ENCODE measurements at regions of chr20 and their contacts with region 1.

Region 1: DNA sequence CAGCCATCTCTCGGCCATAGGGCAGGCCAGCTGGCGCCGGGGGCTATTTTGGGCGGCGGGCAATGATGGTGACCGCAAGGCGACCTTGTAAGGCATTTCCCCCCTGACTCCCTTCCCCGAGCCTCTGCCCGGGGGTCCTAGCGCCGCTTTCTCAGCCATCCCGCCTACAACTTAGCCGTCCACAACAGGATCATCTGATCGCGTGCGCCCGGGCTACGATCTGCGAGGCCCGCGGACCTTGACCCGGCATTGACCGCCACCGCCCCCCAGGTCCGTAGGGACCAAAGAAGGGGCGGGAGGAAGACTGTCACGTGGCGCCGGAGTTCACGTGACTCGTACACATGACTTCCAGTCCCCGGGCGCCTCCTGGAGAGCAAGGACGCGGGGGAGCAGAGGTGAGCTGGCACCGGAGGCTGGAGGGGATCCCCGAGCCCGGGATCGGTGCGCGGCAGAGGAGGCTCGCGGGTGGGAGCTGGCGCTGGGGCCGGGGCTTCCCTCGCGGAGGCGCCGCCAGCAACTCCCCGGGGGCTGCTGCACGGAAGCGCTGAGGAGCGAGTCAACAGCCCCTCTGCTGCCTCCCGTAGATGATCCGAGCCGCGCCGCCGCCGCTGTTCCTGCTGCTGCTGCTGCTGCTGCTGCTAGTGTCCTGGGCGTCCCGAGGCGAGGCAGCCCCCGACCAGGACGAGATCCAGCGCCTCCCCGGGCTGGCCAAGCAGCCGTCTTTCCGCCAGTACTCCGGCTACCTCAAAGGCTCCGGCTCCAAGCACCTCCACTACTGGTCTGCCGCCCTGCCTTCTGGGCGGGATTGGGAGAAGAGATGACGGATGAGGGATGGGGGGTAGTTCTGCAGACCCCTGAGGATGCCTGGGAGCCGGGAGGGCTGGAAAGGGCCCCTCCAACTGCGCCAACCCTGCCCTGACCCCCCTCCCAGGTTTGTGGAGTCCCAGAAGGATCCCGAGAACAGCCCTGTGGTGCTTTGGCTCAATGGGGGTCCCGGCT is at the starts of genes CTSA and NEURL2:
- DNase-seq: peak; percentile 79 to 88 (median 83)
- H3K4me3 ChIP-seq: peak within 1 kb of the TSS; percentile 69 to 79
- H3K4me3 Mint-ChIP-seq: peak within 1 kb of the TSS; percentile 91 to 97 (median 93)
- H3K27ac ChIP-seq: peak within 1 kb of the TSS; percentile 74
- H3K27ac Mint-ChIP-seq: peak within 1 kb of the TSS; percentile 76 to 94 (median 90)
- H3K4me1 ChIP-seq: peaks cover 37% of the 10 kb centered on the region
- H3K4me1 Mint-ChIP-seq: peaks cover 19 to 48% (median 33%) of the 10 kb centered on the region in 4 donors
- H3K27me3 ChIP-seq: no peaks in the 10 kb centered on the region
- H3K27me3 Mint-ChIP-seq: no peaks in the 10 kb centered on the region
- total RNA-seq, gene CTSA: 102 to 103 TPM
- total RNA-seq, gene NEURL2: 5.5 to 5.6 TPM

Region 2: DNA sequence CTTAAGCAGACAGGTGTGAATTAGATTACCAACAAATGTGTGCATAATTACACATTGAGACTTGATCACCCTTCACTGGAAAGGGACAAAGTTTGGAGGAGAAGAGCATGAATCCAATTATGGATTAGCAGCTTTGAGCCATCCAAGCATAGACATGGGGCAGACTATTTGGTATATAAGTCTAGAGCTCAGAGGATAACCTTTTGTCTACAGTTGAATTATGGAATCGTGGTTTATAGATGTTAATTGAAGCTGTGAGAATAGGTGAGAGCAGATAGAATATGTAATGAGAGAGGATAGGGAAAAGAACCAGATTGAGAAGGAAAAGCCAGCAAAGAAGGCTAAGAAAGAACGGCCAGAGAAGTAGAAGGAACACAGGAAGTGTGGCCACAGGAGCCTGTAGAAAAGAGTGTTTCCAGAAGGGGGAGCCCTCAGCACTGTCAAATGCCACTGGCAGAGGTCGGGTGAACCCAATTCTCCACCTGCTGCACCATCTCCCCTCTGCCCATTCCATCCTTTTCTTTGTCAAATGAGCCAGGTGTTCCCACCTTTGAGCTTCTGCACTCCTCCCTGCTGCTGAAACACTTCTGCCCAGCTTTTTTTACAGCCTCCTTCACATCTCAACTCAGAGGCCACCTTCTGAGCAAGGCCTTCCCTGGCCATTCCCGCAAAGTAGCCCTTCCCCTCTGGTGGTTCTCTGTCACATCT is 92.2 kb before region 1 on chr20:
- CTCF ChIA-PET with region 1: interaction called, 15 read pairs
- POLR2A ChIA-PET with region 1: no interaction called
- intact Hi-C with region 1: loop called (anchors 1 kb)
- DNase-seq: peak; percentile 56 to 62 (median 60)
- H3K4me3 ChIP-seq: no peak overlapping the region
- H3K4me3 Mint-ChIP-seq: no peak overlapping the region
- H3K27ac ChIP-seq: no peak overlapping the region
- H3K27ac Mint-ChIP-seq: peak overlapping the region in 6 of 7 donors; percentile 3 to 89 (median 46)
- H3K4me1 ChIP-seq: peaks cover 7% of the 10 kb centered on the region
- H3K4me1 Mint-ChIP-seq: peaks cover 4 to 11% (median 8%) of the 10 kb centered on the region in 4 donors
- H3K27me3 ChIP-seq: no peaks in the 10 kb centered on the region
- H3K27me3 Mint-ChIP-seq: no peaks in the 10 kb centered on the region

Region 3: DNA sequence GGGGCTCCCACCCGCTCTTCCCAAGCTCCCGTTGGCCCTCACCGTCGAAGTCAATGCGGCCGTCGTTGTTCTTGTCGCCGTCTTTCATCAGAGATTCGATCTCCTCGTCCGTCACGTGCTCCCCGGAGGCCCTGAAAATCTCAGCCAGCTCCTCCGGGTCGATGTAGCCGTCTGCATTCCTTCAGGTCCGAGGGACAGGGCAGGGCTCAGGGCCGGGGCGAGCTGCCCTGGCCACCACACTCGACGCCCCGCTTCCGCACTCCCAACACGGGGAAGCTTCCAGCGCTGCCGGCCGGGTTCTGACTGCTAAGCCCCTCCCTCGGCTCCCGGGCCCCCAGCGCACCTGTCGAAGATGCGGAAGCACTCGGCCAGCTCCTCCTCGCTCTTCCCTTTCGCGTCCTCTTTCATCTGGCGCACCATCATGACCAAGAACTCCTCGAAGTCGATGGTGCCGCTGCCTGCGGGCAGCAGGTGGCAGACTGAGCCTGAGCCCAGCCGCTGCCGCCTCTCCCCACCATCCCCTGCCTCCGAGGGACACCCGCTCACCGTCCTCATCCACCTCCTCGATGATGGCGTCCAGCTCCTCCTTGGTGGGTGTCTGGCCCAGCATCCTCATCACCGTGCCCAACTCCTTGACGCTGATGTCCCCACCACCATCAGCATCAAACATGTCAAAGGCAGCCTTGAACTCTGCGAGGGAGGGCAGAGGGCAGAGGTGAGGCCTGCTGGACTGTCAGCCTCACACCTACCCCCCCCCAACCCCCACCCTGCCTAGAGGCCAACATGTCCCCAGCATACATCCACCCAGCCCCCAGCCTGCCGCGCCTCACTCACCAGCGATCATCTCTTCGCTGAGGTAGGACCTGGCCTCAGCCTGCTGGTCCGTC is 67.1 kb before region 1 on chr20:
- CTCF ChIA-PET with region 1: interaction called, 4 read pairs
- POLR2A ChIA-PET with region 1: interaction called, 3 read pairs
- intact Hi-C with region 1: loop called (anchors 2 kb)
- DNase-seq: peak; percentile 37 to 58 (median 47)
- H3K4me3 ChIP-seq: peak overlapping the region in 1 of 2 donors; percentile 46
- H3K4me3 Mint-ChIP-seq: peak overlapping the region; percentile 64 to 84 (median 80)
- H3K27ac ChIP-seq: no peak overlapping the region
- H3K27ac Mint-ChIP-seq: peak overlapping the region in 6 of 7 donors; percentile 2 to 86 (median 66)
- H3K4me1 ChIP-seq: peaks cover 7% of the 10 kb centered on the region
- H3K4me1 Mint-ChIP-seq: peaks cover 7 to 22% (median 15%) of the 10 kb centered on the region in 4 donors
- H3K27me3 ChIP-seq: no peaks in the 10 kb centered on the region
- H3K27me3 Mint-ChIP-seq: peaks cover 6 to 19% of the 10 kb centered on the region in 2 donors

Region 4: DNA sequence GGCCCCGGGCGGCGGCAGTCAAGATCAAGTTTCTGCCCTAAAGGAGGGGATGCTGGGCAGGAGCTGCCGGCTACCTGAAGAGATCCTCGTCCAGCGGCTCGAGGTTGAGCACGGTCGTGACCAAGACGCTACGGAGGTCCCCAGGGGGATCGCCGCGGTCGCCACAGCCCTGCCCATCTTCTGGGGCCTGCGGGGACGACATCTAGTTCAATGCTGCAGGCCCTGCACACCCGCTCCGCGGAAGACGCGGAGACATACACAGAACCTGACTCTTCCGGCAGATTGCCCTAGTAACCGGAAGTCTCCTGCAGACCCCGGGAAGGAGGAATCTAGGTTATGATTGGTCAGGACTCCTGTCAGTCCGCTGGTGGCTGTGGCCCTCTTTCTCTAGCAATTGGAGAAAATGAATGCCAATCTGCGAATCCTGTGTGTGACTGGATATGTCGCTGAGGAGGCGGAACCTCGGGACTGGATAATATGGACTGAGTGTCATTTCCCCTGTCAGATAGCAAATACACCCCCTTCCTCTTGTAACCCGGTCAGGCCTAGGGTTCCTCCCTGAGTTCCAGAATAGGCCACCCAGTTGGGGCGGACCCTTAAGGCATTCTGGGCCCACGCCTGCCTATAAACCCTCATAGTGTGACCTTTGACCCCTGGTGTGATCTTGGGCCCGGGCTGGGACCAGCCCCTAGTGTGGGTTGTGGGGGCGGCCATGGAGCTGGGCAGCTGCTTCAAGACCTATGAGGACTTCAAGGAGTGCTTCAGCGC is 34.0 kb before region 1 on chr20 and contains the starts of genes ACOT8 and ZSWIM3:
- CTCF ChIA-PET with region 1: interaction called, 5 read pairs
- POLR2A ChIA-PET with region 1: interaction called, 48 read pairs
- intact Hi-C with region 1: loop called (anchors 1 kb)
- DNase-seq: peak; percentile 97 to 99 (median 99)
- H3K4me3 ChIP-seq: peak within 1 kb of the TSS; percentile 73 to 78
- H3K4me3 Mint-ChIP-seq: peak within 1 kb of the TSS; percentile 86 to 98 (median 95)
- H3K27ac ChIP-seq: peak within 1 kb of the TSS; percentile 76
- H3K27ac Mint-ChIP-seq: peak within 1 kb of the TSS; percentile 84 to 99 (median 98)
- H3K4me1 ChIP-seq: peaks cover 35% of the 10 kb centered on the region
- H3K4me1 Mint-ChIP-seq: peaks cover 25 to 66% (median 39%) of the 10 kb centered on the region in 4 donors
- H3K27me3 ChIP-seq: no peaks in the 10 kb centered on the region
- H3K27me3 Mint-ChIP-seq: no peaks in the 10 kb centered on the region
- total RNA-seq, gene ACOT8: 30.6 to 33.4 TPM
- total RNA-seq, gene ZSWIM3: 6.7 to 7.1 TPM

Region 5: DNA sequence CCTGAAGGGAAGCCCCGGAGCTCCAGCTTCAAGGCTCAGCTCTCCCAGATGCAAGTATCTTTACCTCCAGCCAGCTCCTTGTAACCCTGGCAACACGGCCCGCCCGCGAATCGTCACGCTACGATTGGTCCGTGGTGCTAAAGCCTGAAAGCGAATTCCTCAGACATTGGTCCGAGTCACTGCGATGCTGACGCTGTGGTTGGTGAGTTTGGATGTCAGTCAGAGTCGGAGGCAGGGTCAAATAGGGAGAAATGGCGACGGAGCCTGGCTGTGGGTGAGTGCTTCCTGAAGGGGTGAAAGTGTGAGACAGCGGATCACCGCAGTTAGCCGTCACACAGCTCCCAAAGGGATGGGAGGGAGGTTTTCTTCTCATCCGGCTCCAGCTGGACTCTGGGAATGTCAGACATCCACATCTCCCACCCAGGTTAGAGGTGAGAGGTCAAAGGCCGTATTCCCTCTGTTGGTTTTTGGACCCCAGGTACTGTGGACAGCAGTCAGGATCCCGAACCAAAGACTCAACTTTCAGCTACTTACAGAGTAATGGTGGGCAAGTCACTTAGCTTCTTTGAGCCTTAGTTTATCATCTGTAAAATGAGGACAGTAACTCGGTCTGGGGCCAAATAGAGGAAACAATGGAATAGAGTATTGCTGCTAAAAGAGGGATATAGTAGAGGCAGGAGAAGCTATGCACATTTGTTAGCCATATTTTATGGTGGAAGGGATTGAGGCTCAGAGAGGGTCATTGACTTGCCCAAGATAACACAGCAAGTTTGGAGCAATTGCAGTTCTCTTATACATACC is 10.1 kb before region 1 on chr20 and contains the start of gene ZSWIM1:
- CTCF ChIA-PET with region 1: interaction called, 18 read pairs
- POLR2A ChIA-PET with region 1: interaction called, 54 read pairs
- intact Hi-C with region 1: no loop called
- DNase-seq: peak; percentile 97 to 99 (median 97)
- H3K4me3 ChIP-seq: peak within 1 kb of the TSS; percentile 68 to 99
- H3K4me3 Mint-ChIP-seq: peak within 1 kb of the TSS; percentile 82 to 94 (median 90)
- H3K27ac ChIP-seq: peak within 1 kb of the TSS; percentile 65
- H3K27ac Mint-ChIP-seq: peak within 1 kb of the TSS; percentile 83 to 97 (median 95)
- H3K4me1 ChIP-seq: peaks cover 44% of the 10 kb centered on the region
- H3K4me1 Mint-ChIP-seq: peaks cover 30 to 47% (median 37%) of the 10 kb centered on the region in 4 donors
- H3K27me3 ChIP-seq: no peaks in the 10 kb centered on the region
- H3K27me3 Mint-ChIP-seq: no peaks in the 10 kb centered on the region
- total RNA-seq, gene ZSWIM1: 18.2 to 18.5 TPM

Region 6: GRCh38 chr20:45910670-45911485 is 19.6 kb after region 1 on chr20:
- CTCF ChIA-PET with region 1: interaction called, 10 read pairs
- POLR2A ChIA-PET with region 1: interaction called, 11 read pairs
- intact Hi-C with region 1: no loop called
- DNase-seq: peak; percentile 68 to 85 (median 78)
- H3K4me3 ChIP-seq: peak overlapping the region; percentile 49 to 76
- H3K4me3 Mint-ChIP-seq: peak overlapping the region; percentile 70 to 89 (median 86)
- H3K27ac ChIP-seq: peak overlapping the region; percentile 1
- H3K27ac Mint-ChIP-seq: peak overlapping the region in 6 of 7 donors; percentile 3 to 88 (median 72)
- H3K4me1 ChIP-seq: peaks cover 18% of the 10 kb centered on the region
- H3K4me1 Mint-ChIP-seq: peaks cover 7 to 19% (median 13%) of the 10 kb centered on the region in 4 donors
- H3K27me3 ChIP-seq: peaks cover 8% of the 10 kb centered on the region
- H3K27me3 Mint-ChIP-seq: peaks cover 9% of the 10 kb centered on the region in 2 donors

Region 7: GRCh38 chr20:45924391-45925261 is 33.3 kb after region 1 on chr20:
- CTCF ChIA-PET with region 1: no interaction called
- POLR2A ChIA-PET with region 1: interaction called, 11 read pairs
- intact Hi-C with region 1: no loop called
- DNase-seq: no peak
- H3K4me3 ChIP-seq: no peak overlapping the region
- H3K4me3 Mint-ChIP-seq: no peak overlapping the region
- H3K27ac ChIP-seq: no peak overlapping the region
- H3K27ac Mint-ChIP-seq: peak overlapping the region in 2 of 7 donors; percentile 3 to 31
- H3K4me1 ChIP-seq: peaks cover 4% of the 10 kb centered on the region
- H3K4me1 Mint-ChIP-seq: peaks cover 0 to 4% (median 2%) of the 10 kb centered on the region in 4 donors
- H3K27me3 ChIP-seq: peaks cover 7% of the 10 kb centered on the region
- H3K27me3 Mint-ChIP-seq: peaks cover 7 to 11% of the 10 kb centered on the region in 2 donors

Measured in CD4-positive, alpha-beta memory T cell (primary cell).